ENCODE measurements at regions of chr11 and their contacts with region 1.

Region 1: DNA sequence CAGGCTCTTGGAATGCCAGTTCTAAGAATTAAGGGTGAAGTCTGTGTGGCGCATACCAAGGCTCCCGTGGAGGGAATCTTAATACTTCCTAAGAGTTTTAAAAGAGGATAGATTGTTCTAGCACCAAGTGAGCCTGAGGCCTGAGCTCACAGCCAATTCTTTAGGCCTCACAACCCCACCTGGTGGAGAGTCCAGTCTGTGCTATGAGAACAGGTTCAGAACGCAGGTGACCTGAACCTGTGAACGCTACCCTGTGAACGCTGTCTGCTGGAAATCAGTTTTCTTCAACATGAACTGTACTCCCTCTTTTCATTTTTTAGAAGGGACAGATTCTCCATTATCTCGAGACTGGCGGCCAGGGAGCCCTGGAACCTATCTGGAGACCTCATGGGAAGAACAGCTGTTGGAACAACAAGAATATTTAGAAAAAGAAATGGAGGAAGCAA is 43.2 kb upstream of the DLAT start:
- DNase-seq: peak; percentile 66
- ATAC-seq: no peak

Region 2: DNA sequence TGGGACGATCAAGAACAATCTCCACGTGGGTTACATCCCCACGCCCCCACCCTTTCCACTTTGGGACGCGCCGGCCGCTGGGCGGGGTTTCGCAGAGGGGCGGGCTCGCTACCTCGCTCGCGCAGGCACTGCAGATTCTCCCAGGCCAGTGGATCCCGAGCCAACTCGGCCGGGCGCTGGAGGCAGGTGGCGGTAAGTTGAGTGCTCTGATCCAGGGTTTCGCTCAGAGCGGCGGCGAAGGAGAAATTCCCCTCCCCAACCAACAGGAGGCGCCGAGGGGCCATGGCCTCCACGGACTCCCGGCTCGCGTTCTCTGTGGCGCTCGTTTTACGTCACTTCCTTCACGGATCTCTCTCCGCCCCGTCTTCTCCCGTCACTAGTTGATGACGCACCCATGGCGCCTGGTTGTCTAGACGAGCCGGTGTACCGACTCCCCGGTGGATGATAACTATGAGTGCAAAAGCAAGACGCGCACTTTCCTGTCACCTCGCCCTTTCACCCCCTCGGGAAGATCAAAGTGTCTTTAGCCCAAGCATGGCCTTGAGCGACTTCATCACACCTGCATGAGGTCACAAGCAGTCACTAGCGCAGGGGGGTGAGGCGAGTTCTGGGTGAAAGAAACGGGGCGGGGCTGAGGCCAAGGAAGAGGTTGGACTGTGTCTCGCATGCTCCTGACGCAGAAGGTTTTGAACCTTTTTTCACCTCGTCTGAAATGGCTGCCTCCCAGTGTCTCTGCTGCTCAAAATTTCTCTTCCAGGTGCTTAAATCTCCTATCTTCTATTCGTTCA is 103.0 kb before region 1 on chr11 and contains the starts of genes CFAP68 and FDXACB1:
- intact Hi-C with region 1: loop called (anchors 5 kb)
- DNase-seq: peak; percentile 97
- ATAC-seq: peak; percentile 98
- total RNA-seq, gene CFAP68: 18.8 TPM
- total RNA-seq, gene FDXACB1: 1.7 TPM

Region 3: DNA sequence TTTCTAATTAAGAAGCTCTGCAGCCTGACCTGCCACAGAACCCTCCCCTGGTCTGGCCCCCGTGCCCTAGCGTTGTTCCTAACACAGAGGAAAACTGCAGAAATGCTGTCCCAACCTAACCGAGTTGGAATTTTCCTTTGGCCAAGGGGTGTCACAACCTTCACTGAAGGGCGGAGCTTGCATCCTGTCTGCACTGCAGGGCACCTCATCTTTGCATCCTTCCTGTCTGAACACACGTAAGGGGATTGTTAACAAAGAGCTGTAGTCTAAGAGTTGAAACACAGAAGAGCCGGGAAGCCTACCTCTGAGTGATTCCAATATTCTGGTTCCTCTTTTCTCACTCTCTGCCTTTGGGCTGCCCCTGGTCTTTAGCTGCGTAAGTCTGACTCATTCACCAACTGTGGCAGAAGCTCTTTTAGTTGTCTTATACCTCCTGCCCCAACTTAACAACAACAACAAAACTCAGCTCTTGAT is 43.3 kb before region 1 on chr11:
- intact Hi-C with region 1: loop called (anchors 2 kb)
- DNase-seq: no peak
- ATAC-seq: peak; percentile 10